ENCODE measurements at regions of chr10 and their contacts with region 1.

Region 1: GRCh38 chr10:117204316-117204715 is 7.0 kb downstream of the KCNK18 start:
- DNase-seq: no peak
- ATAC-seq: no peak
- H3K4me3 ChIP-seq: no peak overlapping the region
- H3K27ac ChIP-seq: no peak overlapping the region
- H3K4me1 ChIP-seq: no peaks in the 10 kb centered on the region
- H3K27me3 ChIP-seq: no peaks in the 10 kb centered on the region
- CTCF ChIP-seq: no peak
- POLR2A ChIP-seq: no peak

Region 2: DNA sequence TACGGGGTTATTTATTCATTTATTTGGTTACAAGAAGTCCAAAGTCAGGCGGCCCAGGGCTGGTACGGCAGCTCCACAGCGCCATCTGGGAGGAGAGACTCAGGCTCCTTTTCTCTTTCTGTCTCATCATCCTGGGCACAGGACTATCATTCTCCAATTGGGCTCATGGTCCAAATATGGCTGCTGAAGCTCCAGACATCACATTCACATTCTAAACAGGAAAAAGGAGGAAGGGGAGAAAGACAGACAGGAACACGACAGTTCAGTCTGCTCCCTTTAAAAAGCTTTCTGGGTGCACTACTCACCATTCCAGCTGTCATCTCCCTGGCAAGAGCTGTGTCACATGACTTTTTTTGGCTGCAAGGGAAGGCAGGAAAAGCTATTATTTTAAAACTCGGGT is 245.3 kb after region 1 on chr10:
- intact Hi-C with region 1: loop called (anchors 10 kb)
- DNase-seq: peak in 2 of 4 donors; percentile 15 to 36
- ATAC-seq: no peak
- H3K4me3 ChIP-seq: no peak overlapping the region
- H3K27ac ChIP-seq: no peak overlapping the region
- H3K4me1 ChIP-seq: peaks cover 9% of the 10 kb centered on the region
- H3K27me3 ChIP-seq: no peaks in the 10 kb centered on the region
- CTCF ChIP-seq: peak in 4 of 7 experiments; percentile 11 to 35 (median 20)
- POLR2A ChIP-seq: no peak